ENCODE measurements at regions of chr3 and their contacts with region 1.

Region 1: DNA sequence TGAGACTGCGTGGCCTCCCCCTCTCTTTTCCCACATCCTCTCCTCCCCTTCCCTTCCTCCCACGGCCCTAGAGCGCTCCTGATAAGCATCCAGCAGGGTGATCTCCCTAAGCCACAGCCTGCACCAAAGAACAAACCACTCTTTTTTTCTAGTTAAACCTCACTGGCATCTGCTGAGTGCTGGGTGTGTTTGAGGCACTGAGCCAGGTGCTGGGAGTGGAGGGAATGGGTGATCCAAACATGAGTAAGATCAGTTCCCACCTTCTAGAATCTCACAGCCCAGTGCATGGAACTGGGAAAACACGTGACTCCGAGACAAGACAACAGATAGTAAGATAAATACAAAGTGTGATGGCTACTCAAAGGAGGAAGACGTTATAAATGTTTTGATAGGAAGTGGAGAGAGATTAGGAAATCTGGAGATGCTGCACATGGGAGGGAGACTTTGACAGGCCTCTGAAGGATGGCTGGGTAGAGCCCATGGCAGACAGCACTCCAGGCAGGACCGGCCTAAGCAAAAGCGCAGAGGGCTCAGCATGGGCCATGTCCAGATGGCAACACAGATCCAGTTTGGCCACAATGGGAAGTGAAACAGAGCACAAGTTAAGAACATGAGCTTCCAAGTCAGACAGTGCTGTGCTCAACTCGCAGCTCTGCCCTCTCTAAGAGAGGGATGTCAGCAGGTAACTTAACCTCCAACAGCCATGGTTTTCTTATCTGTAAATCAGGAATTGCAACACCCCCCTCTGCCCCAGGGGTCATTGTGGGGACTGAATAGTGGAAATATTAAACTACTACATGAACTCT is 55.6 kb downstream of the CCR3 start:
- DNase-seq: no peak
- H3K4me3 Mint-ChIP-seq: no peak overlapping the region
- H3K27ac Mint-ChIP-seq: peak overlapping the region; percentile 15
- H3K4me1 Mint-ChIP-seq: peaks cover 79% of the 10 kb centered on the region
- H3K27me3 Mint-ChIP-seq: peaks cover 15% of the 10 kb centered on the region

Region 2: GRCh38 chr3:45864760-45865519 is 432.9 kb before region 1 on chr3:
- intact Hi-C with region 1: loop called (anchors 2 kb)
- DNase-seq: peak; percentile 38
- H3K4me3 Mint-ChIP-seq: no peak overlapping the region
- H3K27ac Mint-ChIP-seq: peak overlapping the region; percentile 13
- H3K4me1 Mint-ChIP-seq: peaks cover 56% of the 10 kb centered on the region
- H3K27me3 Mint-ChIP-seq: peaks cover 65% of the 10 kb centered on the region

Region 3: DNA sequence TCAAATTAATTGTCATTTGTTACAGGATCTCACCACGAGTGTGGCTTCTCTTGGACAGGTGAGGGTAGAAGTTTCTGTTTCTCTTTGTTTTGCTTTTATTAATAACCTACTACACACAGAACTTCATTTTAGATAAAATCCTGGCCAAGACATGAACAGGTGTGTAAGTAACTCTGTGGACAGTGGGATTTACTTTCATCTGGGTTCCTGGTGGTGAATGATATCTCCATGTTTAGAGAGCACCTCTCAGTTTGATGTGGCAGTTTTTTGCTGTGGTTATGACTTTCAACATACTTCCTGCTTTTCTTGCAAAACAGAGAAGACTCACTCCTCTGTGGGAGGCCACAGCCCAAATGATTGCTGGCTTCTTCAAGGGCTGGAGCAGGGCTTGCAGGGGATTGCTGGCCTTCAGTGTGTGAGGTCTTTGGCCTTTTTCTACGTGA is 199.5 kb before region 1 on chr3:
- intact Hi-C with region 1: loop called (anchors 1 kb)
- DNase-seq: peak; percentile 60
- H3K4me3 Mint-ChIP-seq: peak overlapping the region; percentile 55
- H3K27ac Mint-ChIP-seq: peak overlapping the region; percentile 91
- H3K4me1 Mint-ChIP-seq: peaks cover 43% of the 10 kb centered on the region
- H3K27me3 Mint-ChIP-seq: peaks cover 27% of the 10 kb centered on the region

Region 4: GRCh38 chr3:46266598-46266997 is 31.3 kb before region 1 on chr3:
- intact Hi-C with region 1: loop called (anchors 1 kb)
- DNase-seq: no peak
- H3K4me3 Mint-ChIP-seq: no peak overlapping the region
- H3K27ac Mint-ChIP-seq: no peak overlapping the region
- H3K4me1 Mint-ChIP-seq: peaks cover 23% of the 10 kb centered on the region
- H3K27me3 Mint-ChIP-seq: peaks cover 66% of the 10 kb centered on the region

Region 5: GRCh38 chr3:46284981-46285683 is 12.7 kb before region 1 on chr3:
- intact Hi-C with region 1: loop called (anchors 1 kb)
- DNase-seq: peak; percentile 47
- H3K4me3 Mint-ChIP-seq: no peak overlapping the region
- H3K27ac Mint-ChIP-seq: peak overlapping the region; percentile 53
- H3K4me1 Mint-ChIP-seq: peaks cover 70% of the 10 kb centered on the region
- H3K27me3 Mint-ChIP-seq: peaks cover 22% of the 10 kb centered on the region

Region 6: DNA sequence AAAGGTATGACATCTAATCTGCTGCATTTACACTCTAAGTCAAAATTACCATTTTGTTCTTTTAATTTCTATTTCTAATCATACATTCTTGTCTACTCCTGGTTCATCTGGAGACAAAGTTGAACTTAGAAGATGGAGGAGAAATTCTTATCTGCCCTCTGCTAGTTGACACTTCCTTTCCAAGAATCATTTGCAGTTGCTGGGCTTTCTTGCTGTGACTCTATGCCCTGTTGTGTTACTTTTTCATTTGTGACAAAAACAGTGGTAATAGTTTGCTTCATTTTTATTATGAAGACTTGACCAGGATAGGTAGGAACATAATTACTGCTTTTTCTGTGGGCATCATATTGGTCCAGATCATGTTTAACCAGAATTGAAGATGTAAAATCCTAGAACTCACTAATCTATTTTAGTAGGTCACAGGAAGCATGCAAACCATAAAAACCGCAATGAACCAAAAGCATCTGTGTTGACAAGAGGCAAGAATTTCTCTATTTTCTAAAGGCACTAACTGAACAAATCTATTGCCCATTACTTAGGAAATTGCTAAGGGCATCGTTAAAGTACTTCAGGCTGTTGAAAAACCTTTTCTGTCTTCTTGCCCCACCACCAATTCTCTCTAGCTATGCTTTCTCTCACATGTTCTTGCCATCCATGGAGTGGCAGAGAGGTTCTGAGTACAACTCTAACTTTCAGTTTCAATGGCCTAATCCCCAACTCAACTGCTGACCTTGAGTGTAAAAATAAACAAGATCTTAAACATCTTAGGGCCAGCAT is 51.8 kb after region 1 on chr3:
- intact Hi-C with region 1: loop called (anchors 1 kb)
- DNase-seq: no peak
- H3K4me3 Mint-ChIP-seq: peak overlapping the region; percentile 43
- H3K27ac Mint-ChIP-seq: peak overlapping the region; percentile 71
- H3K4me1 Mint-ChIP-seq: peaks cover 62% of the 10 kb centered on the region
- H3K27me3 Mint-ChIP-seq: peaks cover 39% of the 10 kb centered on the region

Region 7: DNA sequence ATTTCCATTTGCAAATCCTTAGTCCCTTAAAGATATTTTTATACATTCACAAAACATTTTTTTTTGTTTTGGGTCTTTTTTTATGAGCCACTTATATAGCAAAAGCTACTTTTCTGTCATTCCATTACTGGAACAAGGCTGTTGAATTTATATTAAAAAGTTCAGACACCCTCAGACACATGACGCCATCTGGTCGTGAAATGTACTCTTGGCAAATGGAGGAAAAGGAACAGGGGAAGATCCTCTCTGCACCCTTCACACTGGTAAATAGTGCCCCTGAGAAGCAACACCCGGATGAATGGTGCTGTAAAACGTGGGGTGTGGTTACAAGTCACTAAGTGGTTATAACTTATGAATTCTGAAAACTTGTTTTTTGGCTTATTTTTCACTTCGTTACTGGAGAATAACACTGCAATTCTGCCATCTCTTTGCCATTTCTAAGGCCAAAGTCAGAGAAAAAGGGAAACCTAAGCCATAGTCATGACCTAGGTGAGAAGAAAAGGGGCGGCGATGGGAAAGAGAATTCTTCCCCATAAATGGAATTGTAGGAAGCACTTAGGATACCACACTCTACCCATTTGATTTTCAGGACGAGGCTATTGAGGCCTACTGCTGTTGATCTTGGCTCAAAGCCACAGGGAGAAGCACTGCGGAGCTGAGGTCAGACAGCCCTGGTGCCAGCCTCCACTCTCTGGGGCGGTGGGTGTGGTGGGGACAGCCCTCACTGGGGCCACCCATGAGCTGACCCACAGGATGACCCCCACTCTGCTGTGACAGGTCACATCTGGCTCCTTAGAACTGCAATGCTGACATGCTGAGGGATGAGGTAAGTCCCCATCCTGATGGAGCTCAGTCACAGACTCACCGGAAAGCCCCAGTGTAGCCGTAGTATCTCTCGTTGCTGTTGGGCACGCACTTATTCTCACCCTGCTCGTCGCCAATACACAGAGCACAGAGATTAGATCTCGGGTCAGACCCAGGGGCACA is 145.0 kb after region 1 on chr3:
- intact Hi-C with region 1: loop called (anchors 5 kb)
- DNase-seq: peak; percentile 14
- H3K4me3 Mint-ChIP-seq: no peak overlapping the region
- H3K27ac Mint-ChIP-seq: no peak overlapping the region
- H3K4me1 Mint-ChIP-seq: peaks cover 18% of the 10 kb centered on the region
- H3K27me3 Mint-ChIP-seq: peaks cover 10% of the 10 kb centered on the region

Measured in activated T-helper 2 cell treated with anti-CD3 and anti-CD28 coated beads, Interferon-gamma antibody, Interleukin-2, Interleukin-4, amounts not matched to agents 10 μg/mL and 5 μg/mL and 100 μg/mL, durations not matched to agents 14 hours and 24 hours and 36 hours (primary cell).